GM10248 (cell line): ENCODE measurements at regions of chr15 and their contacts with region 1.

Region 1: DNA sequence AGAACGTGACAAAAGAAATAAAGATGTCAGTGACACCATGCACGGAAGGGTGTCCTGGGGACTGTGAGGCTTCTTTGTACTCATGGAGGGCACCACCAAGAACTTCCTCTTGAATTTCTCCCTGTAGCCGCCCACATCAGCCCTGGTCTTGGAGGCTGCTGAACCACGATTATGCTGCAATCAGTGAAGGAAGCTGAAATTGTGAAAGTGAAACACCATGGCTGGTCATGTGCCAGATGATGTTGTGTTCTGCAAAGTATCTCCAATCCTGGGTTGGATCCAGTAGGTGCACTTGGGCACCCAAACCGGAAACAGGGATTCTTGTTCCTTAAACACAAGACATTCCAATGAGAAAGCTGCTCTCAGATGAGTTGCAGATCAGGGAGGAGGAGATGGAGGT is 104.4 kb upstream of the GOLGA6L6 start:
- DNase-seq: no peak
- CTCF ChIP-seq: no peak

Region 2: GRCh38 chr15:20659265-20659664 is 13.3 kb after region 1 on chr15:
- CTCF ChIA-PET with region 1: interaction called, 24 read pairs
- POLR2A ChIA-PET with region 1: no interaction called
- DNase-seq: no peak
- CTCF ChIP-seq: no peak